Posterior vena cava (tissue), 2 donors: ENCODE measurements at regions of chr6 and their contacts with region 1.

Region 1: DNA sequence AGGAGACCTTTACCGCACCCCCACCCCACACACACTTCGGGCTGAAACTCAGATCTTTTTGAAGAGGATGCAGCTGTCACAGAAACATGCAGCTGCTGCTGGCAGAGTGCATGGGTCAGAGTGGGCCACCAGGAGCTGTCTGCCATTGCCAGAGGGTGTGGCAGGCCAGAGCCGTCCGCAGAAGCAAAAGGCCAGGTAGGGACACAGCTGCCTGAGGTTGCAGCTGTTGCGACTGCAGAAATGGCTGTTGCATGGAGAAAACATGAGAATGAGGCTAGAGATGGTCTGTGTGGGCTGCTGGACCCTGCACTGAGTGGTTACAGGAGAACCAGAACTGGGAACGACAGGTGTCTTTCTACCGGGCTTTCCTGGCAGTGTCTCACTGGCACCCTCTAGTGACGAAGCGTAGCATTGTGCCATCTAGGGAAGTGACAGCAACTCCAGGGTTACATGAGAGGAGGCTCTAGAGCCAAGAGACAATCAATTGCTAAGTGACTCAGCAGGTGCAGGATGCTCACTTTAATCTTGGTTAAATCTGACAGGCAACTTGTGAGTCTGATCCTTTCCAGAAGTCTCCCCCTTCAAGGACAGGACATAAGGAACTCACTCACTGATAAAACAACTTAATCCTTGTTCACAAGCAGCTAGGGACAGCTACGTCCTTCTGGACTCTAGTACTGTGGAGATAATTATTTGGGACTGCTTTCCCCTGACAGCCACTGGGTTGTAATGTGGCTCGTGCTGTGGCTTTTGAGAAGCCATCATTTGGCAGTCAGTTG is 29.1 kb upstream of the SERPINB9 start:
- DNase-seq: no peak

Region 2: GRCh38 chr6:2733324-2733723 is 198.8 kb before region 1 on chr6:
- intact Hi-C with region 1: no loop called
- DNase-seq: peak; percentile 89

Region 3: GRCh38 chr6:2791124-2791974 is 140.8 kb before region 1 on chr6:
- intact Hi-C with region 1: loop called in 1 of 2 experiments (anchors 10 kb)
- DNase-seq: no peak

Region 4: GRCh38 chr6:2848851-2849250 is 83.3 kb before region 1 on chr6:
- intact Hi-C with region 1: loop called (anchors 5 to 10 kb)
- DNase-seq: no peak

Region 5: DNA sequence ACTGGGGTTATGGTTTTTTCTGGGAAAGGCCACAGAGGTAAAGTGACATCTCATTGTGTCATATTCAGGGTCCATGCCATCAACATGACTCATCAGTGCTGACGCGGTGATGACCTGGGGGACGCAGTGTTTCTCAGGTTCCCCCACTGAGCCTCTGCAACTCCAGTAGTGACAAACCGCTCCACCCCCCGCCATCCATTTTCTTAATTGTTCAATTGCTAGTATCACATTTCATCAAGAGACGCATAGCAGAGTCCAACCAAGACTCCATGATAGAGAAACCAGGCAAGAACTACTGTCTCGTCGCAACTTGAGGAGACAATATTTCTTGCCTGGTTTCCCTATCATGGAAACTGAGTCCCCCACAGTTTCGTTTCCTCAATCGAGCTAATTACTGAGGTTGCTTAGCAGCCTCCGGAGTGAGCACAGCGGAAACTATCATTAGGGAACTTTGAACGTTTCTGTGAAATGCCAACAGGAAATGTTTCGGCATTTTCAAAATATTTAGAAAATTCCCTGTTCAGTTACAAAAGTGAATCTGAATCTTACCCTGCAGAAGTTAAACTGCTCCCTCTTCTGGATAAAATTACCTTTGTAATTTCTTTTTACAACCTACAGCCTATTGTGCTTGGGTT is 78.3 kb before region 1 on chr6:
- intact Hi-C with region 1: loop called (anchors 5 to 10 kb)
- DNase-seq: peak; percentile 89